Left lung (tissue), 14 donors: ENCODE measurements at regions of chr7 and their contacts with region 1.

Region 1: GRCh38 chr7:87886875-87887274 is 10.6 kb downstream of the DBF4 start:
- DNase-seq: peak in 1 of 4 donors; percentile 41
- ATAC-seq: no peak
- H3K4me3 ChIP-seq: no peak overlapping the region
- H3K27ac ChIP-seq: no peak overlapping the region
- H3K4me1 ChIP-seq: no peaks in the 10 kb centered on the region
- H3K27me3 ChIP-seq: no peaks in the 10 kb centered on the region
- CTCF ChIP-seq: peak; percentile 24 to 32

Region 2: GRCh38 chr7:87747681-87748080 is 139.2 kb before region 1 on chr7:
- intact Hi-C with region 1: no loop called
- DNase-seq: no peak
- ATAC-seq: no peak
- H3K4me3 ChIP-seq: no peak overlapping the region
- H3K27ac ChIP-seq: no peak overlapping the region
- H3K4me1 ChIP-seq: no peaks in the 10 kb centered on the region
- H3K27me3 ChIP-seq: no peaks in the 10 kb centered on the region
- CTCF ChIP-seq: no peak

Region 3: GRCh38 chr7:87797798-87798403 is 89.0 kb before region 1 on chr7:
- intact Hi-C with region 1: loop called in 1 of 2 experiments (anchors 10 kb)
- DNase-seq: peak in 2 of 4 donors; percentile 28 to 46
- ATAC-seq: peak; percentile 83
- H3K4me3 ChIP-seq: no peak overlapping the region
- H3K27ac ChIP-seq: no peak overlapping the region
- H3K4me1 ChIP-seq: no peaks in the 10 kb centered on the region
- H3K27me3 ChIP-seq: no peaks in the 10 kb centered on the region
- CTCF ChIP-seq: peak; percentile 33 to 48

Region 4: GRCh38 chr7:88546808-88547207 is 659.9 kb after region 1 on chr7:
- intact Hi-C with region 1: no loop called
- DNase-seq: no peak
- ATAC-seq: no peak
- H3K4me3 ChIP-seq: no peak overlapping the region
- H3K27ac ChIP-seq: no peak overlapping the region
- H3K4me1 ChIP-seq: no peaks in the 10 kb centered on the region
- H3K27me3 ChIP-seq: no peaks in the 10 kb centered on the region
- CTCF ChIP-seq: peak; percentile 27 to 28